CD14-positive monocyte (primary cell): ENCODE measurements at regions of chr11 and their contacts with region 1.

Region 1: DNA sequence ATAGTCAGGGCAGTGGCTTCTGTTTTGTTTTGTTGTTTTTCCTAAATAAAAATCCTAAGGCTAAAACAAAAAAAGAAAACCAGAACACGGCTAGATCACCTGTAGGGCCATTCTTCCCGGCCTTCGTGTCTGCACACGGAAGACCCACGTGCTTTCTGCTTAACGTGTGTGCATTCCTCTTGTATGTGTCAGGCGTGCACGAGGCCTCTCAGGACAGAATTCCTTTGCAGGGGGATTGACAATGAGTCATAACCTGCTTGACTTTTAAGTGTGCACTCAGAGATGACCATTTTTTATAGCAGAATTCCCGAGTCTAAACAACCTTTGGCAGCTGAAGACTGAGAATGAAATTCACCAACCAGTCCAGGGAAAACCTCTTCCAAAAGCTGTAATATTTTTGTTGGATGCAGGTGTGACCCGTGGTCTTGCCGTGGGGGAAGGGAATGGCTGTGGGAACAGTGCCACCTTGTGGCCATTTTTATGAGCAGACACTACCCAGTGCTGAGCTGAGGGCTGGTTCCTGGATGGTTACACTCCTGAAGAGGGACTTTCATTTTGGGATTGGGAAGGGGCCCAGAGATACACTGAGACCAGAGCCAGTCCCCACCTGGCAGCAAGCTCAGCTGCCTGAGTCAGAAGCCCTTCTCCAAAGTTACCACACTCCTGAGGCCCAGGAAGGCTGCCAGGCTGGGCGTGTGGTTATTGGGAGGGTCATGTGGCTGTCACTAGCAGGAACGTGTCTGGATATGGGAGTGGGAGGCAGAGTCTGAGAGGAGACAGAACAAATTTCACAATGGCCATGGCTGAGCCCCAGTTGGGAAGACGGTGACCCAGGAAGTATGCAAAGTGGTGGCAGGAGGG is 35.8 kb upstream of the DKK3 start:
- DNase-seq: peak; percentile 33 to 65 (median 53)
- H3K4me3 ChIP-seq: no peak overlapping the region
- H3K4me3 Mint-ChIP-seq: peak overlapping the region in 1 of 2 donors; percentile 4
- H3K27ac ChIP-seq: peak overlapping the region in 1 of 2 donors; percentile 16
- H3K27ac Mint-ChIP-seq: peak overlapping the region in 5 of 7 donors; percentile 11 to 90 (median 72)
- H3K4me1 ChIP-seq: peaks cover 36 to 44% of the 10 kb centered on the region in 2 donors
- H3K4me1 Mint-ChIP-seq: peaks cover 42% of the 10 kb centered on the region
- H3K27me3 ChIP-seq: no peaks in the 10 kb centered on the region
- H3K27me3 Mint-ChIP-seq: peaks cover 2 to 7% (median 2%) of the 10 kb centered on the region in 3 donors
- CTCF ChIP-seq: peak; percentile 90

Region 2: GRCh38 chr11:11931461-11932055 is 112.6 kb before region 1 on chr11:
- intact Hi-C with region 1: loop called in 1 of 2 experiments (anchors 10 kb)
- DNase-seq: peak; percentile 1 to 24 (median 20)
- H3K4me3 ChIP-seq: no peak overlapping the region
- H3K4me3 Mint-ChIP-seq: no peak overlapping the region
- H3K27ac ChIP-seq: no peak overlapping the region
- H3K27ac Mint-ChIP-seq: no peak overlapping the region
- H3K4me1 ChIP-seq: no peaks in the 10 kb centered on the region
- H3K4me1 Mint-ChIP-seq: peaks cover 3% of the 10 kb centered on the region
- H3K27me3 ChIP-seq: no peaks in the 10 kb centered on the region
- H3K27me3 Mint-ChIP-seq: no peaks in the 10 kb centered on the region
- CTCF ChIP-seq: peak; percentile 79

Region 3: DNA sequence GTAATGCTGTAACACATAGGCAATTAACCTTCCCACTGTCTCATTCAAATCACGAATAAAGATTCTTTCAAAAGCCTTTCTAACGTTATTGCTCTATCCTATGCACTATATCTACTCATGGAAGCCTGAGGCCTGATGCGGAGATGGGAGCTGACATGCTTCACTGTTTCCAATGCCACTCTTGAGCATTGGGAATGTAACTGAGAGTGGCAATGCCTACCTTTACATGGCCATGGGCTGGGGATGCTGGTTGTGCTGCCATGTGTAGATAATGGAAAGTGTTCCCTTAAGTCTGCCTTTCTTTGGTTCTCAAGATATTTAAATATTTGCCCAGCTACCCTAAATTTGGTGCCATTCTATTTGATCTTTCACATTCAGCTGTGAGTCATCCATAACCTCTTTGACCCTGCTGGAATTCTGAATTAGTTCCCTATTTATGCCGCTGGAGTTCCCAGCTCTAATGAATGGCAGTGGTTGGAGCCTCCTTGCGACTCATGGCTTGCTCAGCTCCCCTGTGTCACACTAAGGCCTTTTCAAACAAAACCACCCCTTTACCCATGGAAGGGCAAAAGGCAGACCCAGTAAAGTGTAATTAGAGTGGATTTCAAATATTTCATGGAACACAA is 14.3 kb before region 1 on chr11:
- intact Hi-C with region 1: no loop called
- DNase-seq: peak in 1 of 3 donors; percentile 53
- H3K4me3 ChIP-seq: no peak overlapping the region
- H3K4me3 Mint-ChIP-seq: no peak overlapping the region
- H3K27ac ChIP-seq: no peak overlapping the region
- H3K27ac Mint-ChIP-seq: no peak overlapping the region
- H3K4me1 ChIP-seq: peaks cover 4 to 6% of the 10 kb centered on the region in 2 donors
- H3K4me1 Mint-ChIP-seq: peaks cover 13% of the 10 kb centered on the region
- H3K27me3 ChIP-seq: no peaks in the 10 kb centered on the region
- H3K27me3 Mint-ChIP-seq: peaks cover 0 to 2% (median under 1%) of the 10 kb centered on the region in 3 donors
- CTCF ChIP-seq: no peak

Region 4: GRCh38 chr11:12087075-12088004 is 43.2 kb after region 1 on chr11:
- intact Hi-C with region 1: no loop called
- DNase-seq: peak; percentile 28 to 63 (median 52)
- H3K4me3 ChIP-seq: peak overlapping the region in 1 of 3 experiments; percentile 60
- H3K4me3 Mint-ChIP-seq: peak overlapping the region; percentile 9 to 61
- H3K27ac ChIP-seq: peak overlapping the region; percentile 81 to 86
- H3K27ac Mint-ChIP-seq: peak overlapping the region; percentile 87 to 95 (median 92)
- H3K4me1 ChIP-seq: peaks cover 72% of the 10 kb centered on the region in 2 donors
- H3K4me1 Mint-ChIP-seq: peaks cover 72% of the 10 kb centered on the region
- H3K27me3 ChIP-seq: no peaks in the 10 kb centered on the region
- H3K27me3 Mint-ChIP-seq: peaks cover 0 to 10% (median 1%) of the 10 kb centered on the region in 3 donors
- CTCF ChIP-seq: peak; percentile 22

Region 5: GRCh38 chr11:12235947-12236743 is 192.0 kb after region 1 on chr11:
- intact Hi-C with region 1: loop called (anchors 1 to 2 kb)
- DNase-seq: peak; percentile 29 to 49 (median 43)
- H3K4me3 ChIP-seq: no peak overlapping the region
- H3K4me3 Mint-ChIP-seq: no peak overlapping the region
- H3K27ac ChIP-seq: peak overlapping the region; percentile 4 to 45
- H3K27ac Mint-ChIP-seq: peak overlapping the region; percentile 26 to 85 (median 74)
- H3K4me1 ChIP-seq: no peaks in the 10 kb centered on the region
- H3K4me1 Mint-ChIP-seq: peaks cover 17% of the 10 kb centered on the region
- H3K27me3 ChIP-seq: no peaks in the 10 kb centered on the region
- H3K27me3 Mint-ChIP-seq: peaks cover 0 to 5% (median 2%) of the 10 kb centered on the region in 3 donors
- CTCF ChIP-seq: peak; percentile 76